ENCODE measurements at regions of chr19 and their contacts with region 1.

Region 1: GRCh38 chr19:18846862-18847548 is 15.2 kb downstream of the UPF1 start:
- DNase-seq: peak; percentile 88
- H3K4me3 ChIP-seq: peak overlapping the region in 1 of 2 experiments; percentile 10; a peak in 2 of 4 replicates
- H3K27ac ChIP-seq: peak overlapping the region; percentile 63 to 98; a peak in 3 of 4 replicates
- H3K4me1 ChIP-seq: peaks cover 24 to 82% of the 10 kb centered on the region in 2 experiments
- H3K27me3 ChIP-seq: no peaks in the 10 kb centered on the region
- CTCF ChIP-seq: peak; percentile 94
- EP300 ChIP-seq: no peak
- RAD21 ChIP-seq: peak; percentile 88

Region 2: DNA sequence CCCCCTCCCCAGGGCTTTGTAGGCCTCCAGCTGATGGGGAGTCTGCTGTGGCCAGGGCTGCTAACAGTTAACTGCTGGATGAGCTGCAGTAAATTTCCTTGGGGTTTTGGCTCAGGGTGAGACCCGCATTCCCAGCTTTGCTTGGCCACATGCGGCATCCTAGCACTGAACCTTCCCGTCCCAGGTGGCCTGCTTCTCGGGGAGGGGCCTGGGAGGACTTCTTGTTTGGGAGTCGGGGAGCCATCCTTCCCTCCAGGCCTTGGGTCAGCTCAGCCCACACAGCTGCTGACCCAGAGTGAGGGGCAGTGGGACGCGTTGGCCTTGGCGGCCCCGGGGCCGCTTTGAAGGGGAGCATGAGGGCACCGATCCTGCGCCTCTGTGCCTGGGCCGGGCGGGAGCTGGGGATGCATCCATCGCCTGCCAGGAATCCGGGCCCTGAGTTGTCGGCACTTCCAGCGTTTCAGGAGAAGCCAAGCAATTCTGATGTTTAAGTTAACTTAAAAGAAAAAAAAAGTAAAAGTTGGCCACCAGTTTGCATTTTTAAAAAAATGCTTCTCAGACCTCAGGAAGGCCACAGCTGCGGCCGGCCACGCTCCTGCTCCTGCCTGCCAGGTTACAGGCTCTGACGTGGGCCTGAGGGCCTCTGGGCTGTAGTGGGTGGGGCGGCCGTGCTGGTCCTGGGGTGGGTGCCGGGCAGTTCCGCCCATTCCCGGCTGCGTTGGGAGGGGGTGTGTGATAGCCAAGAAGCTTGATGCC is 135.8 kb before region 1 on chr19:
- CTCF ChIA-PET with region 1: interaction called, 10 read pairs
- POLR2A ChIA-PET with region 1: no interaction called
- DNase-seq: peak; percentile 20
- H3K4me3 ChIP-seq: no peak overlapping the region
- H3K27ac ChIP-seq: no peak overlapping the region
- H3K4me1 ChIP-seq: peaks cover 0 to 29% of the 10 kb centered on the region in 2 experiments; a peak in 1 of 4 replicates
- H3K27me3 ChIP-seq: no peaks in the 10 kb centered on the region
- CTCF ChIP-seq: no peak
- EP300 ChIP-seq: no peak
- RAD21 ChIP-seq: no peak

Region 3: DNA sequence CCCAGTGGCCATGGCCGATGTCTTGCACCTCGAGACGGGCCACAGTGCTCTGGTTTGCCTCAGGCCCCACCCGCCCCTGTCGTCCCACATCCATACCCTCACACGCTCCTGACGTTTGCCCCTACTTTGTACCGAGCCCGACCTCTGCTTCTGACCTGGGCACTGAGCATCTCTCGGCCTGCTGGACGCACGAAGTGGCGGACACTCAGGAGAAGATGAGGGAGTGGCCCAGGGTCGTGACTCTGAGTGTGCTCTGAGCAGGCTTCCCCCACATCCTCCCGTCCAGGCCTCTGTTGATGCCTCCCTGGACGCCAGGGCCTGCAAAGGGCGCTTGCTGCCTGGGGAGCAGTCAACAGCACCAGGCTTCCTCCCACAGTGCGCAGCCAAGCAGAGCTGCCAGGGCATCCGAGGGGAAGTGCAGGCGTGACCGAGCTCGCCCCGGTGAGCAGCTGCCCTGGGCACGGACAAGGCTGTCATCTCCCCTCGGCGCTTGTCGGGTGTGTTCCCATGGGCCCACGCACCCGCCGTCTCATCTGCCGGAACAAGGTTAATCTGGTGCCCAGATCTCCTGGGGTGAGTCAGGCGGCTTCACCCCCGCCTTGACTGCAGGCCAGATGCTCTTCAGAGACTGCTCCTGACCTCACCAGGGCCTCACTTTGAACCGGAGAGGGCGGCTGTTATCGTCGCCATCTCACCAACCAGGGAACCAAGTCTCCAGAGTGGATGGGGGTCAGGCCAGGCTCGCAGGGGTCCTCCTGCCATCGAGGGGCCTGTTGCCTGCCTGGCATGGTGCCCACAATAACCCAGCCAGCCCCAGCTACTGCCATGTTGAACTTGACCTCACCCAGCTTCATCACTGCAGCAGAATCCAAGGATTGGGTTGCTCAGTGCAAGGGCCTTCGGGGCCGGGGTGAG is 83.1 kb before region 1 on chr19:
- CTCF ChIA-PET with region 1: interaction called, 21 read pairs
- POLR2A ChIA-PET with region 1: no interaction called
- DNase-seq: peak; percentile 88
- H3K4me3 ChIP-seq: no peak overlapping the region
- H3K27ac ChIP-seq: peak overlapping the region; percentile 90 to 96
- H3K4me1 ChIP-seq: peaks cover 33 to 74% of the 10 kb centered on the region in 2 experiments; a peak in 3 of 4 replicates
- H3K27me3 ChIP-seq: no peaks in the 10 kb centered on the region
- CTCF ChIP-seq: no peak
- EP300 ChIP-seq: peak in 1 of 2 experiments; percentile 85; a peak in 3 of 4 replicates
- RAD21 ChIP-seq: no peak; the same call in 1 of the 2 replicates

Region 4: GRCh38 chr19:18831524-18832305 is 15.3 kb before region 1 on chr19 and contains the start of gene UPF1:
- CTCF ChIA-PET with region 1: interaction called, 124 read pairs
- POLR2A ChIA-PET with region 1: interaction called, 9 read pairs
- DNase-seq: peak; percentile 97
- H3K4me3 ChIP-seq: peak within 1 kb of the TSS; percentile 83 to 89
- H3K27ac ChIP-seq: peak within 1 kb of the TSS; percentile 54 to 80; a peak in 3 of 4 replicates
- H3K4me1 ChIP-seq: peaks cover 7 to 18% of the 10 kb centered on the region in 2 experiments; a peak in 3 of 4 replicates
- H3K27me3 ChIP-seq: no peaks in the 10 kb centered on the region
- CTCF ChIP-seq: no peak
- EP300 ChIP-seq: no peak
- RAD21 ChIP-seq: 0 out of 2 replicates have a peak, but pooled peaks have one; percentile 5
- polyA plus RNA-seq, gene UPF1: 20.3 and 33.3 TPM in 2 replicates

Region 5: GRCh38 chr19:18879579-18880373 is 32.8 kb after region 1 on chr19:
- CTCF ChIA-PET with region 1: interaction called, 10 read pairs
- POLR2A ChIA-PET with region 1: no interaction called
- DNase-seq: peak; percentile 88
- H3K4me3 ChIP-seq: no peak overlapping the region
- H3K27ac ChIP-seq: no peak overlapping the region
- H3K4me1 ChIP-seq: no peaks in the 10 kb centered on the region
- H3K27me3 ChIP-seq: no peaks in the 10 kb centered on the region
- CTCF ChIP-seq: no peak
- EP300 ChIP-seq: no peak
- RAD21 ChIP-seq: no peak

Measured in SK-N-SH (cell line).